Heart right ventricle (tissue), 16 donors: ENCODE measurements at regions of chr12 and their contacts with region 1.

Region 1: GRCh38 chr12:29365091-29365490 is 15.9 kb downstream of the ERGIC2 start:
- DNase-seq: no peak
- ATAC-seq: no peak
- H3K4me3 ChIP-seq: no peak overlapping the region
- H3K27ac ChIP-seq: no peak overlapping the region
- H3K4me1 ChIP-seq: no peaks in the 10 kb centered on the region
- H3K27me3 ChIP-seq: no peaks in the 10 kb centered on the region
- CTCF ChIP-seq: no peak

Region 2: DNA sequence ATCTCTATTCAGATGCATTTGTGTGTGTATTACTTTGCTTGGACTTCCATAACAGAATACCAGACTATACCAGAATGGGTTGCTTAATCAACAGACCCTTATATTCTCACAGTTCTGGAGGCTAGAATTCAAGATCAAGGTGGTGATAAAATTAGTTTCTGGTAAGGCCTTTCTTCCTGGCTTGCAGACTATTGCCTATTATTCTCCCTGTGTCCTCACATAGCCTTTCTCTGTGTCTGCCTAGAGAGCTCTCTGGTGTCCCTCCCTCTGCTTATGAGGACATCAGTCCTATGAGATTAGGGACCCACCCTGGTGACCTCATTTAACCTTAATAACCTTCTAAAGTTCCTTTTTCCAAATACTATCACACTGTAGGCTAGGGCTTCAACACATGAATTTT is 110.0 kb before region 1 on chr12:
- intact Hi-C with region 1: no loop called
- DNase-seq: no peak
- ATAC-seq: peak; percentile 59 to 89 (median 82)
- H3K4me3 ChIP-seq: no peak overlapping the region
- H3K27ac ChIP-seq: no peak overlapping the region
- H3K4me1 ChIP-seq: peaks cover 3 to 22% (median 15%) of the 10 kb centered on the region in 9 donors
- H3K27me3 ChIP-seq: no peaks in the 10 kb centered on the region
- CTCF ChIP-seq: no peak

Region 3: GRCh38 chr12:29334937-29335336 is 30.2 kb before region 1 on chr12:
- intact Hi-C with region 1: loop called in 1 of 10 experiments (anchors 2 kb)
- DNase-seq: no peak
- ATAC-seq: no peak
- H3K4me3 ChIP-seq: no peak overlapping the region
- H3K27ac ChIP-seq: no peak overlapping the region
- H3K4me1 ChIP-seq: no peaks in the 10 kb centered on the region
- H3K27me3 ChIP-seq: no peaks in the 10 kb centered on the region
- CTCF ChIP-seq: no peak